Transverse colon (tissue), 4 donors: ENCODE measurements at regions of chr1 and their contacts with region 1.

Region 1: DNA sequence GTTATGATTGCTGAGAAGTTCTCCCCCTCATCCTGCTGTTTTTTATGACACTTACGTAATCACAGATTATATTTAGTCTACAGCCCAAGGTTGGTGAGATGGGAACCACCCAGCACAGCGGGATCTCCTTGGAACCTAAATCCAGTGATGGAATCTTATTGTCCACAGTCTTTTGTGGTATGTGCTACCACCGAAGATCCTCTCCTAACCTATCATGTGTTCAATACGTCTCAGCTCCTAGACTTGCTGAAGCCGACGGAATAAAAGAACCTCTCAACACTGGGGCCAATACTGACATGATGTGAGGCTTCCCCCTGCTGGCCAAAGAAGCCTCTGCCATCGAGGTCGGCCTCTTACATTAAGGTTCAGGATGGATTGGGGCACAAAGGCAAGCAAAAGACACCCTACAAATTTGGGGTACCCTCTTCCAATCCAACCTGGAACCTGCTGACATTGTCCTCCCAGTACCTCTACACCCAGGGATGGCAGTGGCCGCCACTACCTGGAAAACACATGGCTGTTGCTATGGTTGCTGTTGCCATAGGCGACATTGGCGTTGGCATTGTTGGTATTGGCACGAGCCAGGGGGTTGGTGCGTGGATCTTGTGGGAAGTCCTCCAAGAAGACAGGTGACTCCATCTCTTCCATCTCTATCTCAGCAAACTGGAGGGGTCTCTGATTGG is 19.4 kb upstream of the KIF21B start:
- DNase-seq: peak; percentile 72
- H3K4me3 ChIP-seq: no peak overlapping the region
- H3K27ac ChIP-seq: no peak overlapping the region
- H3K4me1 ChIP-seq: peaks cover 0 to 5% (median 4%) of the 10 kb centered on the region in 4 donors
- H3K27me3 ChIP-seq: no peaks in the 10 kb centered on the region
- CTCF ChIP-seq: peak; percentile 83 to 94 (median 89)
- EP300 ChIP-seq: no peak
- POLR2A ChIP-seq: no peak

Region 2: DNA sequence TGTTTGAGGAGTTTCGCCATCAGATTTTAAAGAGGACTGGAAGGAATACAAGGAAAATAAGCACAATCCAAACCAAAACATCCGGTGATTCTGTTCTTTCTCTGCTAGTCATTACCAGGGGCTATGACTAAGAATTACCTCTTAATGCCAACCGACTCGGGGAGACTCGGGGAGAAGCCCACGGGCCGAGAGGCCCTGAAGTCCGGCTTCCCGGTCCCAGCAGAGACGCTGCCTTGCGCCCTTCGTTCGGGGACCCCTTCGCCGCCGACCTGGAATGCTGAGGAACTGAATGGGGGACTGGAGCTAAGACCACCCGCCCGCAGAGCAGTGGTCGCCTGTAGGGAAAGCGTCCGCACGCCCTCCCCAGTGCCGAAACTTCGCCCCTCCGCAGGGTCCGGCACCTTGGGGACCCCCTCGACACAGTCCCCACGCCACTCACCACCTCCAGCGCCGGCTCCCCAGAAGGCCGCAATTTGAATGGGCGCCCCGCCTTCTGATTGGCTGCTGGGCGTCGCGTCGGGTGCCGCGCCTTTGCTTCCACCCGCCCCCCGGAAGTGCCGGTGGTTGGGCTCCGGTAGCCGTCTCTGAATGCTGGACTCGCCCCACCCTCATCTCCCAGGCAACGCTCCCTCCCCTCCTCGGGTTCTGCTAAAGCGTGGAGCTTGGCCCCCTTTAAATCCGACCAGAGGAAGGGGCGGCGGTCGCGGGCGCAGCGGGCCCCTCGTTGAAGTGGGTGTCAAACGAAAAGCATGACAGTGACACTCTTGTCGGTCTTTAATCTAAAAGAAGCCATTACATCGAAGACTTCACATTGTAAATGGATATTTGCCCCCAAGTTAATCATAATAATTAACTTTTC is 422.4 kb before region 1 on chr1 and contains the start of gene KIF14:
- in situ Hi-C with region 1: loop called in 1 of 4 experiments (anchors 25 kb)
- intact Hi-C with region 1: no loop called
- DNase-seq: peak; percentile 95
- H3K4me3 ChIP-seq: peak within 1 kb of the TSS; percentile 46 to 68 (median 56)
- H3K27ac ChIP-seq: peak within 1 kb of the TSS; percentile 45 to 74 (median 68)
- H3K4me1 ChIP-seq: peaks cover 0 to 22% (median 16%) of the 10 kb centered on the region in 4 donors
- H3K27me3 ChIP-seq: no peaks in the 10 kb centered on the region
- CTCF ChIP-seq: no peak
- EP300 ChIP-seq: no peak
- POLR2A ChIP-seq: no peak
- total RNA-seq, gene KIF14: 0.40 to 0.68 (median 0.64) TPM in 3 of 4 donors, not detected in the other

Region 3: DNA sequence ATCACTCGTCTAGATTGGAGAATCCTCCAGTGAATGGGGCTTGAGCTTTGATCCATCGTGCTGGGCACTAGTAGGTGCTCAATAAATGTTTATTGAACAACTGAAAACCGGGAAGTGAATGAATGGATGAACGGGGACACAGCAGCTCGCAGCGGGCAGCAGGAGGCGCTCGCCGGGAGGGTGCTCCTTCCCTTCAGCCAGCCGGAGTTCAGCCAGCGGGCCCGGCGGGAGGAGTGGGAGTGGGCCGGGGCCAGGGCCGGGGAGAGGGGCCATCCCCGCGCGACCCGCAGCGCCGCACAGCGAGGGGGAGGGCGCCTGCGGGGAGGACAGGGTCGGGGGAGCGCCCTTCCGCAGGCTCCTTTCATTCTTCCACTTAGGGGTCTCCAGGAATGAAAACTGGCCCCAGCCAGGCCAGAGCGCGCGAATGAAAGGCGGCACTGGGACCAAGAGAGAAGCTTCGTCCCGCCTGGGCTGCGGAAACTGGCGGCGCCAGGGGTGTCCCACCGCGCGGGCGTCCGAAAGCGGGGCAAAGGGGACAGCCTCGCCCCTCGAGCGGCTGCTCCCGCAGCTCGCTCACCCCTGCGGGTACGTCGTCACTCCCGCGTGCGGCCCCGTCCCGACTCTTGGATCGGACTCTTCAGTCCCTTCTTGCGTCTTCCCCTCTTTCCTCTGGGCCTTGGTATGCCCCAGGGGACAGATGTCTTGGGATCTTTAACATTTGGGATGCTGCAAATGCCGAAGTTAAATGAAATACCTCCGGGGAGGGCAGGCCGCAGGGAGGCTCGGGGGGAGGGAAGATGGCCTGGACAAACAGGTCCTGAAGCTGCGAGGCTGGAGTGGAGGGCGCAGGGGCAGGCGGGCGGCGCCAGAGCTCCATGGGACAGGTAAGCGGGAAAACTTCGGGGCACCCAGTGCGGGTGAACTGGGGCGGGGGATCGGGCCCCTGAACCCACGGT is 151.8 kb before region 1 on chr1:
- in situ Hi-C with region 1: loop called in 1 of 4 experiments (anchors 10 kb)
- intact Hi-C with region 1: no loop called
- DNase-seq: peak; percentile 68
- H3K4me3 ChIP-seq: peak overlapping the region; percentile 23 to 66 (median 44)
- H3K27ac ChIP-seq: peak overlapping the region; percentile 90 to 96 (median 91)
- H3K4me1 ChIP-seq: peaks cover 0 to 45% (median 35%) of the 10 kb centered on the region in 4 donors
- H3K27me3 ChIP-seq: peaks cover 14% of the 10 kb centered on the region
- CTCF ChIP-seq: peak; percentile 32 to 65 (median 37)
- EP300 ChIP-seq: no peak
- POLR2A ChIP-seq: peak; percentile 14

Region 4: DNA sequence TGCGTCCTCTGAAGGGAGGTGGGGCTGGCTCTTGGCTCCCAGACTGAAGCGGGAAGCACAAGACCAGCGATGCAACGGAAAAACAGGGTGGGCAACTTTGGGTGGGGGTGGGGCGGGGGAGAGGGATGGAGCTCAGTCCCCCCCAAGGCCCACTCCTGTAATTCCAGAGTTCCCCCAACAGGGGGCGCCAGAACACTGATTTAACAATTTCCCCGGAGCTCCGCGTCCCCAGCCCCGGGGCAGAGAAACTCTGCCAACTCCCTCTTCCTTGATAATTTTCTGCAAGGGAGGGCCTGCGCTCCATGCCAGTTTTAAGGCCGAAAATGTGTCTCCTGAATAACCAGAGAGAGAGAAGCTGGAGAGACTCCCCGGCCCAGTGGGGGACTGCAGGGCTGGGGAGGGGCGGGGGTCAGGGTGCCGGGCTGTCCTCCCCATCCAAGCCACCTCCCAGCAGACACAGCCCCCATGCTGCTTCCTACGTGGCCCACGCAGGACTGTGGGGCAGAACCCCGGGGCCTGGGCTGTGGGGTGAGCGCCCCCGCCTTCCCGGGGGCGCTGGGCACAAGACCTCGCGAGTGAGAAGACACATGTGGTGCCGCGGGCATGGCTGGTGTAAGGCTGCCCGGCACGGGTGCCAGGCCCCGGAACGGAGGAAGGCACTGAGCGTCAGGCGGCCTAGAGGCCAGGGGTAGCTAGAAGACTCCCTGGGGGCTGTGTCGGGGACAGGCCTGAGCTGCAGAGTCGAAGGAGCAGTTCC is 70.8 kb before region 1 on chr1:
- in situ Hi-C with region 1: loop called in 3 of 4 experiments (anchors 5 kb)
- intact Hi-C with region 1: loop called (anchors 2 kb)
- DNase-seq: peak; percentile 66
- H3K4me3 ChIP-seq: no peak overlapping the region
- H3K27ac ChIP-seq: no peak overlapping the region
- H3K4me1 ChIP-seq: peaks cover 3 to 22% (median 13%) of the 10 kb centered on the region in 4 donors
- H3K27me3 ChIP-seq: no peaks in the 10 kb centered on the region
- CTCF ChIP-seq: peak; percentile 79 to 98 (median 96)
- EP300 ChIP-seq: no peak
- POLR2A ChIP-seq: no peak

Region 5: DNA sequence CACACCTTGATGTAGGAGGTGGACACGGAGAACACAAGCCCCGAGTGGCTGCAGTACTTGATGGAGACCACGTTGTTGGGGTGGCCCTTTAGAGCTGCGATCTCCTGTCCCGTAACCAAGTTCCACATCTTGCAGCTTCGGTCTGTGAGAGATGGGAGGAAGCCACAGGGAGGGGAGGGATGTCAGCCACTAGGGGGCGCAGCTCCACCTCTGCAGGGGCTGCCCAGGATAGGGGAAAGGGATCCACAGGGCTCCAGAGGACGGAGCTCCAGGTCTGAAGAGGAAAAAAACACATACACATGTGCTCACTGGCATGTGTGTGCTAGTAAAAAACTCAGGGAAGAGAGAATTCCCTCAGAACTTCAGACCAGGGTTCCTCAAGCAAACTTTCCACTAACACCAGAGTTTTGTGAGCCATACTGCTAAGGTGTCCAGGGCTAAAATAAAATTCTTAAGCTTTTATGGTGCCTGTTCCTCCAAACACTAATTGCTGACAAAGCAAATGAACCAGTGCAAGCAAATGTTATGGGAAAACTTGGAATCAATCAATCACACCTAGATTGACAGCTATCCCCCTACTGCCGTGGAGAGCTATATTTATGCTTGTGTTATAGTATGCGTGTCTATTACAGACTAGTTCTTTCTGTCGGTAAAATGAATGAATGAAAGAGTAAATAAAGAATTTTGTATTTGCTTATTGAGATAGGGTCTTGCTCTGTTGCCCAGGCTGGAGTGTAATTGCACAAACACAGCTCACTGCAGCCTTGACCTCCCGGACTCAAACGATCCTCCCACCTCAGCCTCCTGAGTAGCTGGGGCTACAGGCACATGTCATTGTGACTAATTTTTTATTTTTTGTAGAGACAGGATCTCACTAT is 63.1 kb before region 1 on chr1:
- in situ Hi-C with region 1: loop called in 2 of 4 experiments (anchors 5 kb)
- intact Hi-C with region 1: no loop called
- DNase-seq: peak; percentile 53
- H3K4me3 ChIP-seq: no peak overlapping the region
- H3K27ac ChIP-seq: no peak overlapping the region
- H3K4me1 ChIP-seq: no peaks in the 10 kb centered on the region
- H3K27me3 ChIP-seq: no peaks in the 10 kb centered on the region
- CTCF ChIP-seq: peak; percentile 28 to 51 (median 46)
- EP300 ChIP-seq: no peak
- POLR2A ChIP-seq: no peak

Region 6: GRCh38 chr1:201176940-201177339 is 134.0 kb after region 1 on chr1:
- in situ Hi-C with region 1: no loop called
- intact Hi-C with region 1: no loop called
- DNase-seq: peak; percentile 30
- H3K4me3 ChIP-seq: no peak overlapping the region
- H3K27ac ChIP-seq: no peak overlapping the region
- H3K4me1 ChIP-seq: no peaks in the 10 kb centered on the region
- H3K27me3 ChIP-seq: no peaks in the 10 kb centered on the region
- CTCF ChIP-seq: no peak
- EP300 ChIP-seq: no peak
- POLR2A ChIP-seq: no peak